Psoas muscle (tissue), 8 donors: ENCODE measurements at regions of chr4 and their contacts with region 1.

Region 1: GRCh38 chr4:13722649-13723048 is 95.1 kb upstream of the BOD1L1 start:
- DNase-seq: no peak
- ATAC-seq: no peak
- H3K4me3 ChIP-seq: no peak overlapping the region
- H3K27ac ChIP-seq: no peak overlapping the region
- H3K4me1 ChIP-seq: no peaks in the 10 kb centered on the region
- H3K27me3 ChIP-seq: no peaks in the 10 kb centered on the region
- CTCF ChIP-seq: no peak

Region 2: DNA sequence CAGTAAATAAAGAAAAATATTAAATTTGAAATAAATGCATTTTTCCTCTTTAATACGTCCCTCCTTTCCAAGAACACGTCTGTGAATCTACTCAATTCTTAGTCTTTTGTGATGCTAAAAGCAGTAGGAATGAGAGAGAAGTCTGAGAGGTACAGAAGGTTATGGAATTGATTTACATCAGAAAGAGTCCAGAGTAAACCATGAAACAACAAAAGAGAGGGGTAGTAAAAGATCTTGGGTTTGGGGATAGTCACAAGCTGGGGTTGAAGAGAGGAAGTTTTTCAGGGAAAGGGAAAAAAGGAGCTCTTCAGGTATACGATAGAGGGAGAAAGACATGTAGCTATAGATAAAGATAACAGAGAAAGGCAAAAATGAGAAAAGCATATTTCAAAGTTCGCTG is 453.9 kb before region 1 on chr4:
- intact Hi-C with region 1: no loop called
- DNase-seq: no peak
- ATAC-seq: no peak
- H3K4me3 ChIP-seq: no peak overlapping the region
- H3K27ac ChIP-seq: no peak overlapping the region
- H3K4me1 ChIP-seq: no peaks in the 10 kb centered on the region
- H3K27me3 ChIP-seq: no peaks in the 10 kb centered on the region
- CTCF ChIP-seq: no peak

Region 3: GRCh38 chr4:14018191-14018853 is 295.7 kb after region 1 on chr4:
- intact Hi-C with region 1: loop called in 1 of 2 experiments (anchors 5 kb)
- DNase-seq: no peak
- ATAC-seq: no peak
- H3K4me3 ChIP-seq: no peak overlapping the region
- H3K27ac ChIP-seq: no peak overlapping the region
- H3K4me1 ChIP-seq: no peaks in the 10 kb centered on the region
- H3K27me3 ChIP-seq: no peaks in the 10 kb centered on the region
- CTCF ChIP-seq: no peak